Panc1 (cell line): ENCODE measurements at regions of chr11 and their contacts with region 1.

Region 1: DNA sequence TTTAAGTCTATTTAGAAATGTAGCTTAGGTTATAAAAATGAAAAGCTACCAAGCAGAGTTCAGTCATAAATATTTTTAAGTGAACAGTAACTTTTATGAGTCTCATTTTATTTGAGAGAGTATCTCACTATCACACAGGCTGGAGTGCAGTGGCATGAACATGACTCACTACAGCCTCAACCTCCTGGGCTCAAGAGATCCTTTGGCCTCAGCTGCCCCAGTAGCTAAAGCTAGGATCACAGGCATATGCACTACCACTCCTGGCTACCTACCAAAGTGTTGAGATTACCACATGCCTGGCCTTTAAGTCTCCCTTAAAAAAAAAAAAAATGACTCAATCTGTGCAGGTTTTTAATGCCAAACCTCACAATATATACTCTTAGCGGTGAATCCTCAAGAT is 34.7 kb upstream of the CLNS1A start:
- DNase-seq: no peak
- ATAC-seq: peak; percentile 68; the same call in 1 of the 2 replicates
- H3K4me3 ChIP-seq: no peak overlapping the region
- H3K27ac ChIP-seq: no peak overlapping the region
- H3K4me1 ChIP-seq: no peaks in the 10 kb centered on the region
- H3K27me3 ChIP-seq: no peaks in the 10 kb centered on the region
- CTCF ChIP-seq: no peak

Region 2: GRCh38 chr11:77771135-77771534 is 98.9 kb after region 1 on chr11:
- CTCF ChIA-PET with region 1: no interaction called
- POLR2A ChIA-PET with region 1: no interaction called
- in situ Hi-C with region 1: no loop called
- intact Hi-C with region 1: no loop called
- DNase-seq: no peak
- ATAC-seq: no peak
- H3K4me3 ChIP-seq: no peak overlapping the region
- H3K27ac ChIP-seq: no peak overlapping the region
- H3K4me1 ChIP-seq: peaks cover 9% of the 10 kb centered on the region; the same call in 1 of the 2 replicates
- H3K27me3 ChIP-seq: no peaks in the 10 kb centered on the region
- CTCF ChIP-seq: no peak

Region 3: DNA sequence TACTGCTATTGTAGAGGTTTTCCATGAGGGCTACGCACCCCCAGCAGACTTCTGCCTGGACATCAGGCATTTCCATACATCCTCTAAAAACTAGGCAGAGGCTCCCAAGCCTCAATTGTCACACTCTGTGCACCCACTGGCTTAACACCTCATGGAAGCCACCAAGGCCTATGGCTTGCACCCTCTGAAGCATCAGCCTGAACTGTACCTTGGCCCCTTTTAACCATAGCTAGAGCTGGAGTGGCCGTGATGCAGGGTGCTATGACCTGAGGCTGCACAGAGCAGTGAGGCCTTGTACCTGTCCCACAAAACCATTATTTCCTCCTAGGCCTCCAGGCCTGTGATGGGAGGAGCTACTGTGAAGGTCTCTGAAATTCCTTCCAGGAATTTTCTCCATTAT is 182.6 kb after region 1 on chr11:
- CTCF ChIA-PET with region 1: no interaction called
- POLR2A ChIA-PET with region 1: interaction called, 19 read pairs
- in situ Hi-C with region 1: no loop called
- intact Hi-C with region 1: no loop called
- DNase-seq: no peak
- ATAC-seq: no peak
- H3K4me3 ChIP-seq: no peak overlapping the region
- H3K27ac ChIP-seq: no peak overlapping the region
- H3K4me1 ChIP-seq: no peaks in the 10 kb centered on the region
- H3K27me3 ChIP-seq: no peaks in the 10 kb centered on the region
- CTCF ChIP-seq: no peak